IMR-90 (cell line): ENCODE measurements at regions of chr1 and their contacts with region 1.

Region 1: GRCh38 chr1:183942933-183943693 is 94.4 kb downstream of the COLGALT2 start:
- DNase-seq: peak; percentile 98
- ATAC-seq: peak; percentile 95
- H3K4me3 ChIP-seq: no peak overlapping the region
- H3K27ac ChIP-seq: 0 out of 2 replicates have a peak overlapping the region, but pooled peaks have one; percentile 8
- H3K4me1 ChIP-seq: peaks cover 6% of the 10 kb centered on the region; the same call in 1 of the 2 replicates
- H3K27me3 ChIP-seq: no peaks in the 10 kb centered on the region
- CTCF ChIP-seq: peak; percentile 37
- POLR2A ChIP-seq: no peak
- RAD21 ChIP-seq: peak; percentile 45

Region 2: DNA sequence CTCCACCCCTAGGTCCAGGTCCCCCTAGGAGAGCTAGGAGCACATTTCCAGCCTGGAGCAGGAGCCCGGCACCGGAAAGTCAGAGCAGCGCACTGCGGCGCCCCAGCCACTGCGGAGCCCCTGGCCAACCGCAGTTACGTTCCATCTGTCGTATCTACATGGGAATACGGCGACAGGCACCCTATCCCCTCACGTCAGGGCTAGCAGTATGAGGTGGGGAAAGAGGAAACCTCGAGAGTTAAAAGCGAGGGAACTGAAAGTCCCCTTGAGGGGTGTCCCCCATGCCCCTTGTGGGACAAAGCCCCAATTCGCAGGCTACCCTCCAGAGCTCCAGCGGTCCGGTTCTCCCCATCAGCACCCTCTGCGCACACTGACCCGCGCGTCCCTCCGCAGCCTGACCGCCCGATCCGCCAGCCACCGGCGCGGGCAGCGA is 93.4 kb after region 1 on chr1:
- CTCF ChIA-PET with region 1: no interaction called
- POLR2A ChIA-PET with region 1: no interaction called
- dilution Hi-C with region 1: no loop called
- in situ Hi-C with region 1: loop called (anchors 10 kb)
- intact Hi-C with region 1: no loop called
- DNase-seq: no peak
- ATAC-seq: peak; percentile 48
- H3K4me3 ChIP-seq: peak overlapping the region; percentile 96
- H3K27ac ChIP-seq: no peak overlapping the region
- H3K4me1 ChIP-seq: peaks cover 9% of the 10 kb centered on the region
- H3K27me3 ChIP-seq: no peaks in the 10 kb centered on the region; the same call in 1 of the 2 replicates
- CTCF ChIP-seq: no peak
- POLR2A ChIP-seq: no peak
- RAD21 ChIP-seq: no peak

Region 3: DNA sequence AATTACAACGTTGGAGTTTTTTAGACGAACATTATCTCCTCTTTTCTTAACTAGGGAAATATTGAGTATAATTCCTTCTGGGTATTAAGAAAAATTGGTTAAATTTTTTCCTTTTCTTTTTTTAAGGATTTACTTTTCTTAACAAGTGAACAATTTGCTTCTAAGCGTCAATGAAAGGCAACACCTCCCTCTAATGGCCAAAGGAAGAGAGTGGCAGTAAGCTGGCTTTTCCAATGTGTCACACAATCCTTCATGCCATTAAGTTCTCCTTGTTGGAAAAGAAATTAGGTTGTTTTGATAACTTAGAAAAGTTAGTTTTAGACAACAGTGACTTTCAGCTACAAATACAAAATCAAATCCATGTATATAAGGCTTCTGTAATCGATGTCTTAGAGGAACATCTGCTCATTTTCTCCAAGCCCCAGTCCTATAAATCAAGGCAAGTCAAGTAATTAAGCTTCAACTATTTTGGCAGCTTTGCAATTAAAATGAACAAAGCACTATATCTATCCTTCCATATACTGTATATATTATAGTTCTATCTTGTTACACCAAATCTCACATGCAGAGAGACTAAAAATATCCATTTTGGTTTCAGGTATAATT is 748.7 kb after region 1 on chr1:
- CTCF ChIA-PET with region 1: interaction called, 6 read pairs
- POLR2A ChIA-PET with region 1: no interaction called
- dilution Hi-C with region 1: no loop called
- in situ Hi-C with region 1: no loop called
- intact Hi-C with region 1: loop called (anchors 10 kb)
- DNase-seq: peak; percentile 68
- ATAC-seq: peak; percentile 47; the same call in 1 of the 2 replicates
- H3K4me3 ChIP-seq: no peak overlapping the region
- H3K27ac ChIP-seq: no peak overlapping the region
- H3K4me1 ChIP-seq: peaks cover 3% of the 10 kb centered on the region; the same call in 1 of the 2 replicates
- H3K27me3 ChIP-seq: no peaks in the 10 kb centered on the region
- CTCF ChIP-seq: peak; percentile 78
- POLR2A ChIP-seq: no peak
- RAD21 ChIP-seq: peak; percentile 78